Endothelial cell of umbilical vein (primary cell): ENCODE measurements at regions of chr2 and their contacts with region 1.

Region 1: DNA sequence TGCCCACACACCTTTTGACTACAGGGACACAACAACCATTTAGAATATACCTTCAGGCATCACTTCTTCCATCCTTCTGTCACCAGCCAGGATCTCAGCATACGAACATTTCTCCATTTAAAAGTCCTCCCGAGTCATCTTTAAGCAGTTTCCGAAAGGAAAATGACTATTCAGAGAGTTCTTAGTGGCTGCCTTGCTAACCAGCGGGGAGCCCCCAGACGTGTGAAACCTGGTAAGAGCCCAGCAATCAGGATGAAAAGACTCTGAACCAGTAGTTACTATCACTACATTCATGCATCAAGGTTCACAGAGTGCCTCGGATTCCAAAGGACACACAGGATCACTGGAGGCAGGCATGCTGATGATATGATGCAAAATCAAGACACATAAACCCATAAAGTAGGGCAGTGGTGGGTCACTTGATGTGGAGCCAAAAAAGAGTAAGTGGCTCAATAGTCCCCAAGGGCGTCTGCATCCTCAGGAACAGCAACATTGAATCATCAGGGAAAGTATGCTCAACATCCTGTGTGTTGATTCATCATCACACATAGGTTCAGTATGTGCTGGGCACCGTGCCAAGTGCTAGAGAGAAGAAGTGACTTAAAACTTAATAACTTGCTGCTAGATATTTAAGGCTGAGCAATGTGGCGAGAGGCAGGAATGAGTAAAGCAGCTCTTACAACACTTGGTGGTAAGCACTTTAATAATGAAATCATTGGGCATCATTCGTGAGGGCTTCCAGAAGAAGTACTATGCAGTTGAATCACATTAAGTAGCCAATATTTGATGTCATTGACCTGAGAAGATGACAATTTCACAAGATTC is 4.4 kb downstream of the CCL20 start:
- DNase-seq: peak; percentile 98
- H3K4me3 ChIP-seq: peak overlapping the region in 1 of 3 experiments; percentile 68
- H3K27ac ChIP-seq: peak overlapping the region; percentile 98
- H3K4me1 ChIP-seq: peaks cover 36% of the 10 kb centered on the region
- H3K27me3 ChIP-seq: no peaks in the 10 kb centered on the region
- CTCF ChIP-seq: no peak
- POLR2A ChIP-seq: no peak

Region 2: DNA sequence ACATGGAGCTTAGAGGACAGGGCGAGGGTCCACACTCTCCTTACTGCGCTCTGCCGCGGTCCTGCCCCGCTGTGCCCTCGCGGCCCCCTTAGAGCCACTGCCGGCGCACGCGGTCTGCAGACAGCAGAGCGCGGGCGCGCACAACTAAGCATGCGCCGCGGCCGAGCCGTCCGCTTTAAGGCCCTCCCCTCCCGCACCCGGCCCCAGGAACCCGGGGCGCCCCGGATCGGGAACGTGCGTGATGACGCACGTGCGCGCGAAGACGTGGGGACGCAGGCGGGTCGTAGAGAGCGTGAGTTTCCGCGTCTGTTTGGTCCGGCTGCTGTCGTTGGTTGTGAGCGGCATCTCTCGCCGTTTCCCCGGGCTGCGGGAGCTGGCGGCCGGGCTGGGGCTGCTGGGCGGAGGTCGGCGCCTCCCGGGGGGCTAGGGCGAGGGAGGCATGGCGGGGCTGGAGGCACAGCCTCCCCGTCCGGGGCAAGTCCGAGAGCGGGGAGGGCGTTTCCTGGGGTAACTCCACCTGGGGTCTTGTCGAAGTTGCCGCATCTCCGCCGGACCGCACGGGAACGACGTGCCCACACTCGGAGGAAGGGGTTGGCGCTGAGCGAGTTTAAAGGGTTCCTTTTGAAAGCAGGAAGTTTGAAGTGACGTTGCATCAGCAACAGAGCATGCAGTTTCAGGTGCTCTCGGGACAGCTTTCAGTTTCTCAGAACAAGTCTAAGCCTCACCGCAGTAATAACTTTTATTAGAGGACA is 982.1 kb before region 1 on chr2 and contains the start of gene RHBDD1:
- CTCF ChIA-PET with region 1: no interaction called
- POLR2A ChIA-PET with region 1: no interaction called
- dilution Hi-C with region 1: no loop called
- intact Hi-C with region 1: loop called (anchors 5 kb)
- DNase-seq: peak; percentile 93
- H3K4me3 ChIP-seq: peak within 1 kb of the TSS; percentile 74 to 84 (median 82)
- H3K27ac ChIP-seq: peak within 1 kb of the TSS; percentile 84
- H3K4me1 ChIP-seq: peaks cover 16% of the 10 kb centered on the region
- H3K27me3 ChIP-seq: no peaks in the 10 kb centered on the region
- CTCF ChIP-seq: no peak
- POLR2A ChIP-seq: peak; percentile 67
- total RNA-seq, gene RHBDD1: 16.1 and 19.4 TPM in 2 replicates

Region 3: DNA sequence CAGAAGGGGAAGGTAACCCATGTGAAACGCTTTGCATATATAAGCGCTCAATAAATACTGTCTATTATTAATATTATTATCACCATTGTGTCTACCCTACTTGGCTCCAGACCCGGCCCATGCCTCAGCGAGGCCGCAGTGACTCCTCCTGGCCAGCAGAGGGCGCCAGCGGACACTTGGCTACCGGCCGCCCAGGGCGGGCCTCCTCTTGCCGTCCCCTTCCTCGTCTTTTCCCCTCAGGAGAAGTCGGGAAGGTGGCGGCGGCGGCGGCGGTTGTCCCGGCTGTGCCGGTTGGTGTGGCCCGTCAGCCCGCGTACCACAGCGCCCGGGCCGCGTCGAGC is 346.2 kb before region 1 on chr2 and contains the start of gene AGFG1:
- CTCF ChIA-PET with region 1: no interaction called
- POLR2A ChIA-PET with region 1: no interaction called
- dilution Hi-C with region 1: no loop called
- intact Hi-C with region 1: loop called (anchors 2 kb)
- DNase-seq: peak; percentile 85
- H3K4me3 ChIP-seq: peak within 1 kb of the TSS; percentile 76 to 100 (median 85)
- H3K27ac ChIP-seq: peak within 1 kb of the TSS; percentile 67
- H3K4me1 ChIP-seq: peaks cover 15% of the 10 kb centered on the region
- H3K27me3 ChIP-seq: no peaks in the 10 kb centered on the region
- CTCF ChIP-seq: peak; percentile 98 to 99
- POLR2A ChIP-seq: peak; percentile 55
- total RNA-seq, gene AGFG1: 69.2 and 87.9 TPM in 2 replicates

Region 4: GRCh38 chr2:227834423-227834822 is 16.4 kb after region 1 on chr2:
- CTCF ChIA-PET with region 1: no interaction called
- POLR2A ChIA-PET with region 1: no interaction called
- dilution Hi-C with region 1: no loop called
- intact Hi-C with region 1: no loop called
- DNase-seq: no peak
- H3K4me3 ChIP-seq: no peak overlapping the region
- H3K27ac ChIP-seq: no peak overlapping the region
- H3K4me1 ChIP-seq: no peaks in the 10 kb centered on the region
- H3K27me3 ChIP-seq: no peaks in the 10 kb centered on the region
- CTCF ChIP-seq: no peak
- POLR2A ChIP-seq: no peak

Region 5: DNA sequence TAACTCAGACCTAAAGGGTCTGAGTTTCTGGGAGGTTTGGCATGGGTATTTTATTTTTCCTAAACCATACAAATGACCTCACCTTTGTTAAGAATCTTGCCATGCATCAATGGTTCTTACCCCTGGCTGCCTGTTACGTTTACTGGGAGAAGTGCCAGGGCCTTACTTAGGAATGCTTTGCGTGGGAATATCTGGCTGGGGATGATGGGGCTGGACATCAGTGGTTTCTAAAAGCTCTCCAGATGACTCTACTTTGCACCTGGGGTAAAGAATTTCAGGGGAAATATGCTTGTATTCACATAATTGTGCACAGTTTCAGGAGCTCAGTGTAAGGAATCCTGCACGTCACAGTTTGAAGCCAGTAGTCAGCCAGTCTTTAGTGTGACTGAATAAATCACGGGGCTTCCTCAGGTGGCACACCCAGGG is 35.2 kb after region 1 on chr2:
- CTCF ChIA-PET with region 1: interaction called, 5 read pairs
- POLR2A ChIA-PET with region 1: no interaction called
- dilution Hi-C with region 1: no loop called
- intact Hi-C with region 1: loop called (anchors 2 kb)
- DNase-seq: no peak
- H3K4me3 ChIP-seq: no peak overlapping the region
- H3K27ac ChIP-seq: no peak overlapping the region
- H3K4me1 ChIP-seq: peaks cover 10% of the 10 kb centered on the region
- H3K27me3 ChIP-seq: no peaks in the 10 kb centered on the region
- CTCF ChIP-seq: no peak
- POLR2A ChIP-seq: no peak

Region 6: DNA sequence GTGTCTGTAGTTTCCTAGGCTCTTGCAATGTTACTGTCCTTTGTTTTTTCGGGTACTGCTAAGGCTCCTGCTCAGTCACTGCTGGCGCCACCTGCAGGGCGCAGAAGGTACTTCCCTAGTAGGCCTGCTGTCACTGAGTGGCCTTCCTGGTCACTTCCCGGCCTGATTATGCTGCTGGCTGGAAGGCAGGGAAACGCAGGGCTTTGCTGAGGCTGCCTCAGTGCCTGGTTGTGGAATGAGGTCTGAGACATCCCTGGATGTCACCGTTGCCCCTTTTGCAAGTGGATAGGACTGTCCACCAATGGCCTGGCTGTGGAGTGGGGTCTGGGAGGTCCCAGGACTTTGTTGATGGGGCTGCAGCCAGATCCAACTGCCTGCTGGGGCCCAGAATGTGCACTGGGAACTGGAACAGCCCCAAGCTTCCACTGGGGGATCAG is 66.5 kb after region 1 on chr2:
- CTCF ChIA-PET with region 1: no interaction called
- POLR2A ChIA-PET with region 1: no interaction called
- dilution Hi-C with region 1: no loop called
- intact Hi-C with region 1: loop called (anchors 1 kb)
- DNase-seq: peak; percentile 77
- H3K4me3 ChIP-seq: no peak overlapping the region
- H3K27ac ChIP-seq: no peak overlapping the region
- H3K4me1 ChIP-seq: peaks cover 4% of the 10 kb centered on the region
- H3K27me3 ChIP-seq: no peaks in the 10 kb centered on the region
- CTCF ChIP-seq: peak; percentile 95 to 96
- POLR2A ChIP-seq: no peak